GM23248 (cell line): ENCODE measurements at regions of chr2 and their contacts with region 1.

Region 1: DNA sequence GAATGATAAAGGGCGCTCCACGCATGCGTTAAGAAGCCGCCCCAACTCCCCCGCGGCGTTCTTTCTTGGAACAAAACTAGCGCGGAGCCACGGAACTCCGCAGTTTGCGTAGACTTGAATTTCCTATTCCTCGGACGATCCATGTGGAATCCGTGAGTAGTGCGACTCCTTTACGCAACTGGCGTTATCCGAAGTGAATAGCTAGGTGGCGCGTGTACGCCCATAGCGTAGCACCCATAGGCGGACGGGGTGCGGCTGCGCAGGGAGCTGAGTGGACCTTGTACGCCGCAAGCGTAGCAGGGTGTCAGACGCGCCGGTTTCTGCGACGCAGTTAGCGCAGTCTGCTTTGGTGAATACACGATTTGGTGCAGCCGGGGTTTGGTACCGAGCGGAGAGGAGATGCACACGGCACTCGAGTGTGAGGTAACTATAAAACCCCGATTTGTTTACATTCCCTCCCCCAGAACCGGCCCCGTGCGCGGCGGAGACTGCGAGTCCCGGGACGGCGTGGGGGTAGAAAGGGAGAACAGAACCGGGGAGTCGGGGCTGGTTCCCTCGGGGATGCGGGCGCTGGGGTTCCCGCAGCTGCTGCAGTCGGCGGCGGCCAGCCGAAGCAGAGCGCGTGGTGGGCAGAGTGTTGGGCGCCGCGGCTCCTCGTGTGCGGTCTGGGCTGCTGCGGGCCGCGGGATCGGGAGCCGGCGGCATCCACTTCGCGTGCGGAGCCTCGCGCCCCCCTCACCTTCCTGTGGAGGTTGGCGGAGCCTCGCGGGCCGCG is at the start of gene SLC39A10:
- DNase-seq: peak; percentile 99
- H3K4me3 ChIP-seq: peak within 1 kb of the TSS; percentile 91
- H3K27ac ChIP-seq: peak within 1 kb of the TSS; percentile 93
- H3K4me1 ChIP-seq: peaks cover 27% of the 10 kb centered on the region
- H3K27me3 ChIP-seq: no peaks in the 10 kb centered on the region
- total RNA-seq, gene SLC39A10: 82.6 and 85.4 TPM in 2 replicates

Region 2: DNA sequence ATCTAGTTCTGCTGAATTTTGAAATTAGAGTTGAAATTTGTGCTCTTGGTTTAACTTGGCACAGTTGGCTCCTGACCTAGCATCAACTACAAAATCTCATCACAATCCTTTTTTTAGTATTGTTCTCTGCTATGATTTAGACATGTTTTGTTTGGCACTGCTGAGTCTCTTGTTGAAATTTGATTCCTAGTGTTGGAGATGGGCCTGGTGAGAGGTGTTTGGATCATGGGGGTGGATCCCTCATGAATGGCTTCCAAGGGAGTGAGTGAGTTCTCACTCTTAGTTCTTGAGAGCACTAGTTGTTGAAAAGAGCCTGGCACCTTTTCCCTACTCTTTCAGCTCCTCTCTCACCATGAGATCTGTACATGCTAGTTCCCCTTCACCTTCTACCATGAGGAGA is 605.6 kb before region 1 on chr2:
- in situ Hi-C with region 1: no loop called
- DNase-seq: no peak
- H3K4me3 ChIP-seq: no peak overlapping the region
- H3K27ac ChIP-seq: no peak overlapping the region
- H3K4me1 ChIP-seq: no peaks in the 10 kb centered on the region
- H3K27me3 ChIP-seq: no peaks in the 10 kb centered on the region

Region 3: GRCh38 chr2:195318440-195319111 is 338.5 kb before region 1 on chr2:
- in situ Hi-C with region 1: loop called (anchors 25 kb)
- DNase-seq: peak; percentile 72
- H3K4me3 ChIP-seq: no peak overlapping the region
- H3K27ac ChIP-seq: peak overlapping the region; percentile 74
- H3K4me1 ChIP-seq: peaks cover 35% of the 10 kb centered on the region
- H3K27me3 ChIP-seq: no peaks in the 10 kb centered on the region

Region 4: DNA sequence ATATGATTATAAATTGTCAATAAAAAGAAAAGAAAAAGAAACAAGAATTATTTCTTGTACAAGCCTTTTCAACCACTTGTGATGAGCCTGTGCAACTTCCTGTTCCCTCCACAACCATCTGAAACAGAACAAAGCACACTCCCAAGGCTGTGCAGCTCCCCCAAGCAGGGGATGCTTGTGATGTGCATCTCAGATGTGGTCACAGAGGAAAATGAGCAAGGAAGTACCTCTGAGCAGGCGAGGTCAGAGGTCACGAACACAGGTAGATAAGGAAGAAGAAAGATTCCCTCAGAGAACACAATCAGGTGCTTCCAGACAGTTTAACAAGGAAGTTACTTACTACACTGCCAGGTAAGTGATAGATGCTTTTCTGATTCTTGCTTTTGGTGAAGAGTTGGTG is 274.9 kb before region 1 on chr2:
- in situ Hi-C with region 1: no loop called
- DNase-seq: no peak
- H3K4me3 ChIP-seq: no peak overlapping the region
- H3K27ac ChIP-seq: no peak overlapping the region
- H3K4me1 ChIP-seq: no peaks in the 10 kb centered on the region
- H3K27me3 ChIP-seq: no peaks in the 10 kb centered on the region

Region 5: DNA sequence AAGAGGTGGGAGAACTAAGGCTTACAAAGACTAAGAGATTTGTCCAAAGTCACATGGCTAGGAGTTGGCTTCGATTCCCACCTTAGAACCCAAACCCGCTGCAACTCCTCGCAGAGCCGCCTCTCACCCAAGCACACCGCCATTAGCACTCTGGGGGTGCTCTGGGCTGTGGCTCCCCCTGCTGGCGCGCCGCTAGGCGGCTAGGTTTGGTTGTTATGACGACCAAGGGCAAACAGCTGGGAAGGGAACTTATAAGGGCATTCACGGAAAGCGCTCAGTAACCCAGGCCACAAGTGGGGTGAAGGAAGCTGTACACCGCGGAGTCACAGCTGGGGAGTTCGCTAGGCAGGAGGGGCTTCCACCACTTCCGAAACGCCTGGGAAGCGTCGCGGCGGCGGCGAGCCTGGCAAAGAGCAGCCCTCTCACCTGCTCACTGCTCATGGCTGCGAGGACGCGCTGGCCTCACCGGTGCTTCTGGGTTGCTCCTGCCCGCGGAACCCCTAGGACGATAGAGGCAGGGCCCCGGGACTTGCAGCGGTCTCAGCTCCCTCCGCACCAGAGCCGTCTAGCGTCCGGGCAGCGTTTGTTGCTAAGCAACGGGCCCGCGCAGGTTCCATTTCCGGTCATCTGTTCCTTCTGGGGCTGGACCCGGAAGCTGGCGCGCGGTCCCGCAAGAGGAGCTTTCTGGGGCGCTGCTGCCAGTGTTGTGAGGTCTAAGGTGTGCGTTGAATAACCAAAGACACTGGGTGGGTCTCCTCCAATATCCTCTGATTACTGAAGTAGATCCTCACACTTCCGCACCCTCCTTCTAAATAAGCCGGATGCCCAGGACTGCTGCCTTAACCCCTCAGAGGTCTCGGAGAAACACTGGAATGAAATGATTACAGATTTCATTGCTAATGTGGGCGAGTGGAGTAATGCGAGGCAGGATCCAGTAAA is 411.5 kb after region 1 on chr2 and contains the start of gene DNAH7:
- in situ Hi-C with region 1: loop called (anchors 25 kb)
- DNase-seq: peak; percentile 98
- H3K4me3 ChIP-seq: peak within 1 kb of the TSS; percentile 88
- H3K27ac ChIP-seq: peak within 1 kb of the TSS; percentile 98
- H3K4me1 ChIP-seq: peaks cover 16% of the 10 kb centered on the region
- H3K27me3 ChIP-seq: no peaks in the 10 kb centered on the region
- total RNA-seq, gene DNAH7: 0.43 and 0.89 TPM in 2 replicates

Region 6: GRCh38 chr2:196566961-196567666 is 910.1 kb after region 1 on chr2:
- in situ Hi-C with region 1: no loop called
- DNase-seq: peak; percentile 34
- H3K4me3 ChIP-seq: no peak overlapping the region
- H3K27ac ChIP-seq: no peak overlapping the region
- H3K4me1 ChIP-seq: no peaks in the 10 kb centered on the region
- H3K27me3 ChIP-seq: no peaks in the 10 kb centered on the region